Heart right ventricle (tissue), 16 donors: ENCODE measurements at regions of chr1 and their contacts with region 1.

Region 1: DNA sequence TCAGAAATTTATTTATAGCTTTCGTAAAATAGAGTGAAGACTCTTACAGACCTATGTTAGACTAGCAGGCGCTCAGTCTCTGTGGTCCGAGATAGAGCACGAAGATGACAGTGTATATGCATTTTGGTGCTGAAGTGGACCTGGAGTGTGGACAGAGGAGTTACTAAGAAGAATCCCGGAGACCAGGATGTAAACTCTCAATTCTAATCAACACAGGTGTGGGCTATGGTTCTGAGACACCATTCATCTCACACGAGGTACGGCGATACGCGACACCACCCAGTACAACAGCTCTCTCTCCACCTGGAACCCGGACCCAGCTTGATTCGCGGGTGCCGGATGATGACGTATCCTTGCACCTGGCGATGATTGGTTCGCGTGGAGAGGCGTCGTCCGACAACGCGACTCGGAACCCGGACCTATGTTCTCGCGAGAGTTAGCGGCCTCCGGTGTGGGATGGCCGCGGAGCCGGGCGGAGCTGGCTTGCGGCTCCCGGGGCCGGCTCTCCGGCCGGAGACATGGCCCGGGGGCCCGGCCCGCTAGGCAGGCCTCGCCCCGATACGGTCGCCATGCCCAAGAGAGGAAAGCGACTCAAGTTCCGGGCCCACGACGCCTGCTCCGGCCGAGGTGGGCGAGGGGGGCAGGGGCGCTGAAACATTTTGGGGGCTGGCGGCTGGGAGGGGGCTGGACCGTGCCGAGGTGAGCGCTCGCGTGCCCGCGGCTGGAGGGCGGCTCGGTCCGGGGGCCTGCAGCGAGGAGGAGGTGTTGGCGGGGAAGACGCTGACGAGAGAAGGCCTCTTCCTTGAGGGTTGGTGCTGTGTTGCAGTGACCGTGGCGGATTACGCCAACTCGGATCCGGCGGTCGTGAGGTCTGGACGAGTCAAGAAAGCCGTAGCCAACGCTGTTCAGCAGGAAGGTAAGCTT is at the start of gene TMEM183A:
- DNase-seq: peak; percentile 94 to 97
- ATAC-seq: peak; percentile 98 to 99 (median 99)
- H3K4me3 ChIP-seq: peak within 1 kb of the TSS; percentile 67 to 95 (median 88)
- H3K27ac ChIP-seq: peak within 1 kb of the TSS; percentile 82 to 96 (median 91)
- H3K4me1 ChIP-seq: peaks cover 0 to 41% (median 24%) of the 10 kb centered on the region in 9 donors
- H3K27me3 ChIP-seq: no peaks in the 10 kb centered on the region
- CTCF ChIP-seq: no peak
- total RNA-seq, gene TMEM183A: 18.2 to 34.2 (median 21.1) TPM

Region 2: GRCh38 chr1:202848191-202848542 is 159.0 kb before region 1 on chr1:
- intact Hi-C with region 1: no loop called
- DNase-seq: no peak
- ATAC-seq: no peak
- H3K4me3 ChIP-seq: no peak overlapping the region
- H3K27ac ChIP-seq: no peak overlapping the region
- H3K4me1 ChIP-seq: no peaks in the 10 kb centered on the region
- H3K27me3 ChIP-seq: no peaks in the 10 kb centered on the region
- CTCF ChIP-seq: no peak

Region 3: GRCh38 chr1:202957733-202958543 is 49.3 kb before region 1 on chr1 and contains the start of gene ADIPOR1:
- intact Hi-C with region 1: loop called in 1 of 10 experiments (anchors 10 kb)
- DNase-seq: peak; percentile 91
- ATAC-seq: peak; percentile 97 to 99 (median 98)
- H3K4me3 ChIP-seq: peak within 1 kb of the TSS; percentile 72 to 98 (median 89)
- H3K27ac ChIP-seq: peak within 1 kb of the TSS; percentile 82 to 97 (median 92)
- H3K4me1 ChIP-seq: peaks cover 4 to 73% (median 53%) of the 10 kb centered on the region in 9 donors
- H3K27me3 ChIP-seq: no peaks in the 10 kb centered on the region
- CTCF ChIP-seq: peak in 8 of 9 donors; percentile 9 to 49 (median 22)
- total RNA-seq, gene ADIPOR1: 79.7 to 117 (median 95.0) TPM